Sciatic nerve (tissue), 2 donors: ENCODE measurements at regions of chr17 and their contacts with region 1.

Region 1: DNA sequence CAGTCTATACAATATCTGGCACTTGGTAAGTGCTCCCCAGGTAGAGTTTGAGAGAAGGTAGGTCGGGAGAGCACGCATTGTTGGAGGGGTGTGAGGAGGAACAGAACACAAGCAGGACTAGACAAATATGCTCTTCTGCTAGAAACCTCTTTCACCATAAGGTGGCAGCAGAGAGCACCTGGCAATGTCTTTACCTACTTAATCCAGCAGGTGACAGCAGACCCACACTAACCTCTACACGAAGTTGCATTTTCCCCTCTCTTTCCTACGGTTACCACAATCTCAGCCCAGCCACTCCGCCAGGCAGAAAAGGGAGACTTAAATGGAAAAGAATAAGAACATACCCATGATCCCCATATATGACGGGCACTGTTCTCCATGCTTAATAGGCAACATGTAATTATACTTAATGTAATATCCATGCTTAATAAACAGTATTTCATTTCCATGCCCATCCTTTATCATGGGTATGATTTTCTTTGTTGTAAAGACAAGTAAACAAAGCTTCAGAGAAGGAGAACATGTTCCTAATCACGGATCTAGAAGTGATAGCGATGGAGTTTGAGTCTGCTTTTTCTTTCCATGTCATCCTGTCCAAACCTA is 55.1 kb upstream of the CCL2 start:
- DNase-seq: peak; percentile 88
- ATAC-seq: peak; percentile 96

Region 2: GRCh38 chr17:33981711-33982601 is 218.1 kb before region 1 on chr17:
- intact Hi-C with region 1: no loop called
- DNase-seq: no peak
- ATAC-seq: no peak

Region 3: DNA sequence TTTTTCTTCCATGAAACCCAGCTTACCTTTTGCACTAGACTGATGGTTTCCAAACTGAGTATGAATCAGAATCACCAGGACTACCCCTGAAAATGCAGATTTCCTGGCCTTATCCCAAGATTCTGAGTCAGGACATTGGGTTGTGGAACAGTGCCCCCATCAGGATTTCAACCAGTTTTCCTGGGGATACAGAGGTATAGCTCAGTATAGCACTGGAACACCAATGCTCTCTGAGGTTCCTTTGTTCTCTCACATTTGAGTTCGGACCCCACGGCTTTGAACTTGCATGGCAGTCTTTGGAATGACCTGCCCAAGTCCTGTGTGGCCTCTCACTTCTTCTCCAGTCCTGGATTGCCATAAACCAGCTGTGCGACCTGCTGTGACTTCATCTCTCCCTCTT is 106.4 kb after region 1 on chr17:
- intact Hi-C with region 1: loop called (anchors 5 kb)
- DNase-seq: no peak
- ATAC-seq: peak; percentile 73

Region 4: DNA sequence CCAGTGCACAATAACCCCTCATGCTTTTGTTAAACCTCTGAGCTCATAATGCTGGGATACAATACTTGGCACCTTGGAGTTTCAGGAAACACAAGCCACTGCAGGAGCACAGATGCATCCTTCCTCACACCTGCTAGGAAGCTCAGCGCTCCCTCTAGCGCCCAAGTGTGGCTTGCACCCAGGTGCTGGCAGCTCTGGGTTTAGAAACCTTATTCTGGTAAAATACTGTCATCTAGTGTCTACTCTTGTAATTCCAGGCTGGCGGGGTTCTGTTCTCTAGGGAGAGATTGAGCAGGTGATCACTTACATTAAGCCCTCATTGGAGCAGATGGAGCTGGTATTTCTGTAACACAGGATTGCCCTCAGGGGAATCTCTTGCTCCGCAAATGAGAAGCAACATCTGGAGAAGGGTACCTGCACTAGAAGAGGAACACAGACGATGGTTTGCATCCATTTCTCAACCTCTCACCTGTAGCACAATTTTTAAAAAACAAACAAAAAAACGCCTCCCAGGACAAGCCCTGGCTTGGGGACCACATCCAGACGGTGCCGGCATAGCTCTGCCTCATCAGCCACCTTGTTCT is 161.5 kb after region 1 on chr17:
- intact Hi-C with region 1: loop called (anchors 1 kb)
- DNase-seq: peak; percentile 95
- ATAC-seq: peak; percentile 96

Region 5: GRCh38 chr17:34443619-34444469 is 243.8 kb after region 1 on chr17:
- intact Hi-C with region 1: no loop called
- DNase-seq: no peak
- ATAC-seq: no peak